ENCODE measurements at regions of chr9 and their contacts with region 1.

Region 1: DNA sequence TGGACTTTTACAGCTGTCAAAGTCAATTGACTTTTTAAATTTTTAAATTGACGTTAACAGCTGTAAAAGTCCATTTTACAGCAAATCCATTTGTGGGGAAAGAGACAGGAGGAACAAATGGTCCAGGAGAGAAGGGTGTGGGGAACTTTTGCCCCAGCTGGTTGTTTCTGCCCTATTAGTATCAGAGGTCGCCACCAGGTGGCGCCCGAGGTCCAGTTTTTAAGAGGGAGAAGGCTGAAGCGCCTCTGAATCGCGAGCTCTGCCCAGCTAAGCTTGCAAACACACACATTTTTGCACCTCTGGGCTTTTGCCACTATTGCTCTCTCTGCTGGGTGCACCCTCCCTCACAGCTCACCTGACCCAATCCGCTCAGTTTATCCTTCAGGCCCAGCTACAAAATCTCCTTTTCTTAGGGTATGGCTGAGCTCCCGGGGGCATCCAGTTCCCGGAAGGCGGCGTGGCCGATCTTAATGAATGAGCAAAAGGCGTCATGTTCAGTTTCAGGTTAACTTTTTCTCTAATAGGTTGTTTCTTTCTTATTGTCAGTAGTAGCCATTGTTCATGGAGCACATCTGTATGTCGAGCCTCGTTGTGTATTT is 6.3 kb upstream of the TTLL11 start:
- DNase-seq: peak; percentile 79
- H3K4me3 Mint-ChIP-seq: no peak overlapping the region
- H3K27ac Mint-ChIP-seq: no peak overlapping the region
- H3K4me1 Mint-ChIP-seq: peaks cover 6% of the 10 kb centered on the region
- H3K27me3 Mint-ChIP-seq: no peaks in the 10 kb centered on the region
- CTCF ChIP-seq: peak; percentile 84

Region 2: GRCh38 chr9:122080986-122081385 is 18.4 kb before region 1 on chr9:
- CTCF ChIA-PET with region 1: interaction called, 14 read pairs
- POLR2A ChIA-PET with region 1: no interaction called
- intact Hi-C with region 1: no loop called
- DNase-seq: no peak
- H3K4me3 Mint-ChIP-seq: no peak overlapping the region
- H3K27ac Mint-ChIP-seq: no peak overlapping the region
- H3K4me1 Mint-ChIP-seq: no peaks in the 10 kb centered on the region
- H3K27me3 Mint-ChIP-seq: no peaks in the 10 kb centered on the region
- CTCF ChIP-seq: no peak

Region 3: DNA sequence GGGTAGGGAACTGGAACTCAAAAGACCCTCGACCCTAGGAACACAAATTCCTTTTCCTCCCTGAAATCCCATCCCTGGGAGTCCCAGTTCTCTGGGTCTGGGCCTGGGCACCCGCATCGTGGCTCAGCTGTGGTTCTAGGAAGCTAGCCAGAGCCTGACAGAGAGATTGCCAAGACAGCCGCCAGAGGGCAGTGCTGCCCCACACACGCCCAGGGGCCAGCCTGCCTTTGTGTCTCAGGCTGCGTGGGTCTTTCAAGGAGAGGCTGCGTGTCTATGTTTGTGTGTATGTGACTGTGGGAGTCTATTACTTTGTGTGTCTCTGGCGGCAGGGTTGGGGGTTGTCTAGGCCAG is 25.8 kb after region 1 on chr9:
- CTCF ChIA-PET with region 1: interaction called, 237 read pairs
- POLR2A ChIA-PET with region 1: interaction called, 3 read pairs
- intact Hi-C with region 1: loop called (anchors 1 kb)
- DNase-seq: peak; percentile 79
- H3K4me3 Mint-ChIP-seq: no peak overlapping the region
- H3K27ac Mint-ChIP-seq: no peak overlapping the region
- H3K4me1 Mint-ChIP-seq: peaks cover 18% of the 10 kb centered on the region
- H3K27me3 Mint-ChIP-seq: peaks cover 11% of the 10 kb centered on the region
- CTCF ChIP-seq: peak; percentile 98

Region 4: DNA sequence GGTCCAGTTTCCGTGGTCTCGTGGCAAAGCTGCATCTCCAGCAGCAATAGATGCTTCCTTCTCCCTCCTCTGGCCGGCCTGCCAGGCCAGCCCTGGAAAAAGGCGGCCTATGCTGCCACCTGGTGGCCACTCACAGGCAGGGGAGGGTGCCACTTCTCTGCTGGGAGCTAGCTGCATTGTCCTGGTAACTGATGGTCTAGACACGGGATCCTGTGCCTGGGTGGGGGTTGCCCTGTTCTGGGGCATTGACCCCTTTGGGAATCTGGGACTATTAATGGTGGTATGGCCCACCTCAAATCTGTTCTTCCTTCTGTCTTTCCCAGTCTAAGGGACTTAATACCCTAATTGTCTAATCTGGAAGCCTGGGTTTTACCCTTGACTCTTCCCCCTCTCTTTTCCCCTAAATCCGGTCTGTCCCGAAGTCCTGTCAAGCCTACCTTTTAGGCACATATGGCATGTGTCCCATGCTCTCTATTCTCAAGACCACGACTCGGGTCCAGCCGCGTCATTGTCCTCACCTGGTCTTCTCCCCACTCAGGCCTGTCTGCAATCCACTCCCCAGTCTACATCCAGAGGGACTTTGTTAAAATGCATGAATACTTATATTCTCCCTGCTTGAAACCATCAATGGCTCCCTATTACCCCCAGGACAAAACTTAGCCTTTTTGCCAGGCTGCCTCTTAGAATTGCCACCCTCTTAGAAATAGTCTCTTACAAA is 251.4 kb after region 1 on chr9:
- CTCF ChIA-PET with region 1: interaction called, 164 read pairs
- POLR2A ChIA-PET with region 1: no interaction called
- intact Hi-C with region 1: loop called (anchors 1 kb)
- DNase-seq: peak; percentile 77
- H3K4me3 Mint-ChIP-seq: no peak overlapping the region
- H3K27ac Mint-ChIP-seq: no peak overlapping the region
- H3K4me1 Mint-ChIP-seq: no peaks in the 10 kb centered on the region
- H3K27me3 Mint-ChIP-seq: no peaks in the 10 kb centered on the region
- CTCF ChIP-seq: peak; percentile 89

Region 5: GRCh38 chr9:122453677-122454135 is 354.3 kb after region 1 on chr9:
- CTCF ChIA-PET with region 1: interaction called, 29 read pairs
- POLR2A ChIA-PET with region 1: no interaction called
- intact Hi-C with region 1: loop called (anchors 1 kb)
- DNase-seq: no peak
- H3K4me3 Mint-ChIP-seq: no peak overlapping the region
- H3K27ac Mint-ChIP-seq: peak overlapping the region; percentile 19
- H3K4me1 Mint-ChIP-seq: no peaks in the 10 kb centered on the region
- H3K27me3 Mint-ChIP-seq: peaks cover 43% of the 10 kb centered on the region
- CTCF ChIP-seq: no peak